ENCODE measurements at regions of chr14 and their contacts with region 1.

Region 1: DNA sequence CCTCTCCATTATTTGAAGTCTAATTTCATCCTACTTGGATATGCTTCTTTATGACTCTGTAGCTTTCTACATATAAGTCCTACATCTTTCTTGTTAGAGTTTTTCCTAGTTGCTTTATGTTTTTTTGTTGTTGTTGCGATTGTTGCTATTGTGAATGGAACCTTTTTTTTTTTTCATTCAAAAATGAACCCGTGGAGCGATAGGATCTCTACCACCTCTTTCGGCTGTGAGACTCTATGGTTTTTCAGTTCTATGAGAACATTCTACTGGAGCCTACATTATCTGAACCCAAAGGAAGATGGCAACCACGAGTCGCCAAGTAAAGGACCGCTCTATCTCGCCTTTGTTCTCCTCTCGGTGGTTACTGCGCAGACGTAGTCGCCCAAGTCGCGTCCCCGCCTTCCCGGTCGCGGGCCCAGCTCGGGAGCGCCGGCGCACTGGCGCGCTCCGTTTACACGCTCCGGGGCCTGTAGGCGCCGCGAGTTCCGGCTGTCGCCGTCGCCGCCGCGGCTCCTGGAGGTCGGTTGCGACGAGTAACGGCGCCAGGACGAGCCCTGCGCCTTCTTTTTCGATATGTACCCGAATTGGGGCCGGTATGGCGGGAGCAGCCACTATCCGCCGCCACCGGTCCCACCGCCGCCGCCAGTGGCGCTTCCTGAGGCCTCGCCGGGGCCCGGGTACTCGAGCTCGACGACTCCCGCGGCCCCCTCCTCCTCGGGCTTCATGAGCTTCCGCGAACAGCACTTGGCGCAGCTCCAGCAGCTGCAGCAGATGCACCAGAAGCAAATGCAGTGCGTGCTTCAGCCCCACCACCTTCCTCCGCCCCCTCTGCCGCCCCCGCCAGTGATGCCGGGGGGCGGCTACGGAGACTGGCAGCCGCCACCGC is at the start of gene YLPM1:
- DNase-seq: peak; percentile 88 to 98 (median 91)
- ATAC-seq: peak; percentile 93
- H3K4me3 ChIP-seq: peak within 1 kb of the TSS; percentile 90 to 95
- H3K4me3 Mint-ChIP-seq: peak within 1 kb of the TSS; percentile 86
- H3K27ac ChIP-seq: peak within 1 kb of the TSS; percentile 68 to 98
- H3K27ac Mint-ChIP-seq: peak within 1 kb of the TSS; percentile 93
- H3K4me1 ChIP-seq: peaks cover 43% of the 10 kb centered on the region
- H3K4me1 Mint-ChIP-seq: peaks cover 51% of the 10 kb centered on the region
- H3K27me3 ChIP-seq: no peaks in the 10 kb centered on the region
- H3K27me3 Mint-ChIP-seq: no peaks in the 10 kb centered on the region
- CTCF ChIP-seq: peak; percentile 41
- total RNA-seq, gene YLPM1: 77.3 to 78.8 TPM

Region 2: GRCh38 chr14:72926292-72927028 is 1836.7 kb before region 1 on chr14 and contains the start of gene DCAF4:
- CTCF ChIA-PET with region 1: no interaction called
- POLR2A ChIA-PET with region 1: no interaction called
- intact Hi-C with region 1: loop called in 1 of 2 experiments (anchors 10 kb)
- DNase-seq: peak; percentile 89 to 97 (median 93)
- ATAC-seq: peak; percentile 93
- H3K4me3 ChIP-seq: peak within 1 kb of the TSS; percentile 79 to 87
- H3K4me3 Mint-ChIP-seq: peak within 1 kb of the TSS; percentile 94
- H3K27ac ChIP-seq: peak within 1 kb of the TSS; percentile 67 to 76
- H3K27ac Mint-ChIP-seq: peak within 1 kb of the TSS; percentile 92
- H3K4me1 ChIP-seq: peaks cover 13% of the 10 kb centered on the region
- H3K4me1 Mint-ChIP-seq: peaks cover 15% of the 10 kb centered on the region
- H3K27me3 ChIP-seq: no peaks in the 10 kb centered on the region
- H3K27me3 Mint-ChIP-seq: peaks cover 2% of the 10 kb centered on the region
- CTCF ChIP-seq: no peak
- total RNA-seq, gene DCAF4: 21.9 to 26.6 TPM

Region 3: DNA sequence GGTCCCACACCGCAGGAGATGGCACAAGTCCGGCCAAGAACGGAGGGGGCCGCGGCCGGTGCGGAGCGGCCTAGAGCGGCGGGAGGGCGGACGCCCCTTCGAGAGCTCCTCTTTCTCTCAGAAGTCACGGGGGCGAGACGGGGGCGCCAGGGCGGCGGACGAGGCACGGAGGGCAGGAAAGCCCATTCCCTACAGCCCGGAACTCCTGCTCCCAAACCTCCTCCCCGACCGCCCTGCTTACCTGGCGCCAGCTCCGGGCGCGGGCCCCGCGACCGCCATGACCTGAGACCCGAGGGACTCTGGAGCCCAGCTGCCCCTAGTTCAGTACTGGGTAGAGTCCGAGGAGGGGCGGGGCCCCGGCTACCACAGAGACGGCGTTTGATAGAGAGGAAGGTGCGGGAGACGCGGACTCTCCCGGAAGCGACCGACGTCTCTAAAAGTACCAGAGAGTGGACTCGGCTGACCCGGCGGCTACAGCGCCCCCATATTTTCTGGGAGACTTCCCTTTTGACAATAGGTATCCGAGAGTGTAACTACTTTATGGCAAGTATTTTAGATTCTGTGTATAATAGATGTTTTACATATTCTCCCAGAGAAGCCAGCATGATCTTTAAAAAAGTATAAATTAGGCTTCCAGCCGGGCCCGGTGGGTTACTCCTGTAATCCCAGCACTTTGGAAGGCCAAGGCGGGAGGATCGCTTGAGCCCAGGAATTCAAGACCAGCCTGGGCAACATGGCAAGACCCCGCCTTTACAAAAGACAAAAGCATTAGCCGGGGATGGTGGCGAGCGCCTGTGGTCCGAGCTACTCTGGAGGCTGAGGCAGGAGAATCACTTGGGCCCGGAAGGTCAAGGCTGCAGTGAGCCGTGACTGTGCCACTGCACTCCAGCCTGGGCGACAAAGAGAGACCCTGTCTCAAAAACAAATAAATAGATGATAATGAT is 460.3 kb before region 1 on chr14 and contains the start of gene ABCD4:
- CTCF ChIA-PET with region 1: no interaction called
- POLR2A ChIA-PET with region 1: no interaction called
- intact Hi-C with region 1: loop called in 1 of 2 experiments (anchors 10 kb)
- DNase-seq: peak; percentile 69 to 90 (median 86)
- ATAC-seq: peak; percentile 87
- H3K4me3 ChIP-seq: peak within 1 kb of the TSS; percentile 69 to 85
- H3K4me3 Mint-ChIP-seq: peak within 1 kb of the TSS; percentile 100
- H3K27ac ChIP-seq: peak within 1 kb of the TSS; percentile 78 to 85
- H3K27ac Mint-ChIP-seq: peak within 1 kb of the TSS; percentile 98
- H3K4me1 ChIP-seq: peaks cover 19% of the 10 kb centered on the region
- H3K4me1 Mint-ChIP-seq: peaks cover 28% of the 10 kb centered on the region
- H3K27me3 ChIP-seq: no peaks in the 10 kb centered on the region
- H3K27me3 Mint-ChIP-seq: no peaks in the 10 kb centered on the region
- CTCF ChIP-seq: peak; percentile 18
- total RNA-seq, gene ABCD4: 67.5 to 76.9 TPM

Region 4: GRCh38 chr14:74712499-74713394 is 50.4 kb before region 1 on chr14 and contains the starts of genes AREL1 and FCF1:
- CTCF ChIA-PET with region 1: no interaction called
- POLR2A ChIA-PET with region 1: interaction called, 4 read pairs
- intact Hi-C with region 1: loop called (anchors 1 kb)
- DNase-seq: peak; percentile 56 to 94 (median 80)
- ATAC-seq: peak; percentile 93
- H3K4me3 ChIP-seq: peak within 1 kb of the TSS; percentile 63 to 87
- H3K4me3 Mint-ChIP-seq: peak within 1 kb of the TSS; percentile 98
- H3K27ac ChIP-seq: peak within 1 kb of the TSS; percentile 78 to 93
- H3K27ac Mint-ChIP-seq: peak within 1 kb of the TSS; percentile 99
- H3K4me1 ChIP-seq: peaks cover 24% of the 10 kb centered on the region
- H3K4me1 Mint-ChIP-seq: peaks cover 65% of the 10 kb centered on the region
- H3K27me3 ChIP-seq: no peaks in the 10 kb centered on the region
- H3K27me3 Mint-ChIP-seq: no peaks in the 10 kb centered on the region
- CTCF ChIP-seq: no peak
- total RNA-seq, gene AREL1: 44.5 to 60.1 TPM
- total RNA-seq, gene FCF1: 32.6 to 34.0 TPM

Region 5: GRCh38 chr14:74793506-74794168 is 30.5 kb after region 1 on chr14:
- CTCF ChIA-PET with region 1: interaction called, 4 read pairs
- POLR2A ChIA-PET with region 1: interaction called, 9 read pairs
- intact Hi-C with region 1: loop called in 1 of 2 experiments (anchors 2 kb)
- DNase-seq: peak in 2 of 9 experiments; percentile 36 to 59
- ATAC-seq: peak; percentile 51
- H3K4me3 ChIP-seq: peak overlapping the region in 1 of 2 experiments; percentile 9
- H3K4me3 Mint-ChIP-seq: peak overlapping the region; percentile 70
- H3K27ac ChIP-seq: peak overlapping the region in 1 of 2 experiments; percentile 3
- H3K27ac Mint-ChIP-seq: peak overlapping the region; percentile 89
- H3K4me1 ChIP-seq: peaks cover 28% of the 10 kb centered on the region
- H3K4me1 Mint-ChIP-seq: peaks cover 47% of the 10 kb centered on the region
- H3K27me3 ChIP-seq: no peaks in the 10 kb centered on the region
- H3K27me3 Mint-ChIP-seq: no peaks in the 10 kb centered on the region
- CTCF ChIP-seq: peak; percentile 35

Region 6: GRCh38 chr14:74881431-74882361 is 118.5 kb after region 1 on chr14 and contains the start of gene DLST:
- CTCF ChIA-PET with region 1: no interaction called
- POLR2A ChIA-PET with region 1: interaction called, 3 read pairs
- intact Hi-C with region 1: loop called (anchors 1 to 5 kb)
- DNase-seq: peak; percentile 74 to 92 (median 85)
- ATAC-seq: peak; percentile 76
- H3K4me3 ChIP-seq: peak within 1 kb of the TSS; percentile 62 to 80
- H3K4me3 Mint-ChIP-seq: peak within 1 kb of the TSS; percentile 99
- H3K27ac ChIP-seq: peak within 1 kb of the TSS; percentile 82 to 90
- H3K27ac Mint-ChIP-seq: peak within 1 kb of the TSS; percentile 100
- H3K4me1 ChIP-seq: peaks cover 44% of the 10 kb centered on the region
- H3K4me1 Mint-ChIP-seq: peaks cover 62% of the 10 kb centered on the region
- H3K27me3 ChIP-seq: no peaks in the 10 kb centered on the region
- H3K27me3 Mint-ChIP-seq: no peaks in the 10 kb centered on the region
- CTCF ChIP-seq: no peak
- total RNA-seq, gene DLST: 142 to 156 TPM